Gastrocnemius medialis (tissue), 4 donors: ENCODE measurements at regions of chr2 and their contacts with region 1.

Region 1: DNA sequence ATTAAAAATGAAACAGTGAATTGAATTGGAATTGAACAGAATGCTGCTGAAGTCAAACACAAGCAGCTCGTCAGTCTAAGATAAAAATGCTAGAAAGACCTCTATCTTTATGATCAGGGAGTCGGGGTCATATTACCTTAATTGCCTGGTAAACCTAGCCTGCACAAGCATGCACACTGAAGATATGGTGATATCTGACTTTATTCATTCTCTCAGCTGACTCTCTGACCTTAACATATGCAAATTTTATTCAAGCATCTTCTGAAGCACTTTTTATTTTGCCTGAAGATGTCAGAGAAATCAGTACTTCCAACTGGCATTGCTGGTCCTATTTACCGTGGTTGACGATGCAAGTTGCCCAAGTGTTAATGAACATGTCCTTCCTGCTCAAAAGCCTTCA is 56.4 kb downstream of the DNER start:
- DNase-seq: no peak
- ATAC-seq: no peak
- H3K4me3 ChIP-seq: no peak overlapping the region
- H3K27ac ChIP-seq: no peak overlapping the region
- H3K4me1 ChIP-seq: no peaks in the 10 kb centered on the region
- H3K27me3 ChIP-seq: no peaks in the 10 kb centered on the region
- CTCF ChIP-seq: no peak
- POLR2A ChIP-seq: no peak

Region 2: DNA sequence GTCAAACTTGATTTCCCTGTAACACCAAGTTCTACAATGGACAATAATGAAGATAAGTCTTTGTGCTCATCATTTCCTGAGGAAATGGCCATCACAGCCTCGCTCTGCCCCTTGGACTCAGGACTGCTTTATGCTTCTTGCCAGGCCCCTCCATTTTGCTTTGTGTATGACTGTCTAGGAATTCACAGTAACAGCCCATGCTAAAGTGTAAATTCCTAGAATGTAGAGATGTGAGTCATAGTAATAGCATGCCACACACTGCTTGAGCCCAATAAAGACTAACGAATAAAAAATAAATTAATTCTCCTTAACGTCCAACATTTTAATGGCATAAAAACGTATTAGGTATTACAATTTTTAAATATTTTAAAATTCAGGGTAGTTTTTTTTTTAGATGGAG is 613.4 kb before region 1 on chr2:
- in situ Hi-C with region 1: no loop called
- intact Hi-C with region 1: no loop called
- DNase-seq: no peak
- ATAC-seq: no peak
- H3K4me3 ChIP-seq: no peak overlapping the region
- H3K27ac ChIP-seq: no peak overlapping the region
- H3K4me1 ChIP-seq: no peaks in the 10 kb centered on the region
- H3K27me3 ChIP-seq: no peaks in the 10 kb centered on the region
- CTCF ChIP-seq: no peak
- POLR2A ChIP-seq: no peak

Region 3: DNA sequence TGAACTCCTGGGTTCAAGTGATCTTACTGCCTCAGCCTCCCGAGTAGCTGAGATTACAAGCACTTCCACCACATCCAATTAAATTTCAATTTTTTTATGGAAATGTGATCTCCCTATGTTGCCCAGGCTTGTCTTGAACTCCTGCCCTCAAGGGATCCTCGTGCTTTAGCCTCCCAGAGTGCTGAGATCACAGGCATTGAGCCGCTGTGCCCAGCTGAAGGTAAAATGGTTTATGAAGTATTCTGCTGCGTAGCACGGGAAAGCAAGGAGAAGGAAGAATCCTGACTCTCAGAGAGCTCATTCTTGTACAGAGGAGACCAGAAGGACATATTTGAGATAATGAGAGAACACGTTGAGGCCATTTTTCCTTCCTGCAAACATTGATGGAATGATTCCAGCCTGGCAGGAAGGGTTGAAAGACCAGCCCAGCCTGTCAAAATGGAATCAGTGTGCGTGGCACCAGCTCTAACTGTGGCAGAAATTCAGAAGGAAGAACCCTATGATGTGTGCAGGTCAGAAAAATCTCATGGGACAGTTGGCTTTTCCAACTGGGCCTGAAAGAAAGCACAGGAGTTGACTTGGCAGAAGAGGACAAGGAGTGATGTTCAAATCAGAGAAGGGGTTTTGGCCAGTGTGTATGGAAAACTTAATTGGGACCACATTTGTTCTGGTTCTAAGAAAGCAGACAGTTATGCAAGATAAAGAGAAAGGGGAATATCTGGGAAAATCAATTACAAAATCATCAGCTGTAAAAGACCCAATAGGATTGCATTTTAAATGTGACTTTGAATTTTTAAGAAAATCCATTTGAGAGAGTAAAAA is 194.3 kb before region 1 on chr2:
- in situ Hi-C with region 1: no loop called
- intact Hi-C with region 1: no loop called
- DNase-seq: no peak
- ATAC-seq: peak in 1 of 2 donors; percentile 24
- H3K4me3 ChIP-seq: no peak overlapping the region
- H3K27ac ChIP-seq: no peak overlapping the region
- H3K4me1 ChIP-seq: no peaks in the 10 kb centered on the region
- H3K27me3 ChIP-seq: no peaks in the 10 kb centered on the region
- CTCF ChIP-seq: no peak
- POLR2A ChIP-seq: no peak

Region 4: DNA sequence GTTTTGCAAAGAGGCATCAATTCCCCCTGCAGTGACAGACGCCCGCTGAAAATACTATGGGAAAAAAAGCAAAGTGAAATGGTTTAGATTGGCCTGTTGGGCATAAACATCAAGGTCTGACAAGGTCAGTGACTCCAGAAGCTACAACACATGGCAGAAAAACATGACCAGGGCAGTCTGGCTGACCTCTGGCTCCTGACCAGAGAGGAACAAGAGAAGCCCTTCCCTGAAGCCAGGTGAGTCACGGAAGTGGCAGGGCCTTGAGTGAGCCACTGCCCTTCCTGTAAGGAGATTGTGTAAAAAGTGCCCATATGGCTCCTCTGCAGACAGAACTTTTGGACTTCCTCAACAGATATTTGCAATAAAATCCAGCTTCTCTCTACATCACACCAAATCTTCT is 15.6 kb before region 1 on chr2:
- in situ Hi-C with region 1: no loop called
- intact Hi-C with region 1: loop called (anchors 1 kb)
- DNase-seq: no peak
- ATAC-seq: no peak
- H3K4me3 ChIP-seq: no peak overlapping the region
- H3K27ac ChIP-seq: no peak overlapping the region
- H3K4me1 ChIP-seq: no peaks in the 10 kb centered on the region
- H3K27me3 ChIP-seq: no peaks in the 10 kb centered on the region
- CTCF ChIP-seq: no peak
- POLR2A ChIP-seq: no peak